ENCODE measurements at regions of chr20 and their contacts with region 1.

Region 1: DNA sequence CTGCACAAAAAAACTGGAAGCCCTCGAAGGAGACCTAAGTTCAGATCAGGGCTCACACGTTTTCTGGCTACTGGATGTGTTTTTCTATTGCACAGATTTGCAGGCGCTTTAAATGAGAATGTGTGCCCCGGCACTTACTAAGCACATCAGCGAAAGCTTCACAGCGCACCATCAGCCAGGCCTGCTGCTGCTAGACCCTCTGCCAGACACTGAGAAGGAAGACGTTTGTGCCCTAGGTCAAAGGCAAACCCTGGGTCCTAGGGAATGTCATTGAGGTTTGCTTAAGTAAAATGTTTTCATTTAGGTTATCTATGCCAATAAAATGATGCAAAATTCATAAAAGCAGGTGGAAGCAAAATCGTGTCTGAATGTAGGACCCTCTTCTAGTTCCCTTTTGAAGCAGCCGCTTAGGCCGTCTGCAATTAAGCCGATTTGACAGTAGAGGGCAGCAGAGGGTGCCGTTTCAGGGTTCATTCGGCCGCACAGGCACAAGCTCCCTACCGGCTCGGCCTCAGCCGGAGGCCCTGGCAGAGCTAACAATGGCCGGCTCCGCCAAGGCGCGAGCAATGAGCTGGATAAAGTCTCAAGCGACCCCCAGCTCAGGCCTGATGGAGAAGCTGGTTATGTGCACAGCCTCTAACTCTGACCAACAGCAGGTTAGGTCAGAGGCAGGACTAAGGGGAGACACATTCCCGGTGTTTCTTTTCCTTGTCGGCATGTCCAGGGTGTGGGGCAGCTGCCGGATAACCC is 107.2 kb upstream of the FOXA2 start:
- DNase-seq: peak; percentile 46 to 70
- H3K4me3 ChIP-seq: no peak overlapping the region
- H3K4me1 ChIP-seq: no peaks in the 10 kb centered on the region
- H3K27me3 ChIP-seq: no peaks in the 10 kb centered on the region

Region 2: GRCh38 chr20:22744341-22745193 is 53.0 kb after region 1 on chr20:
- in situ Hi-C with region 1: no loop called
- DNase-seq: no peak
- H3K4me3 ChIP-seq: no peak overlapping the region
- H3K4me1 ChIP-seq: no peaks in the 10 kb centered on the region
- H3K27me3 ChIP-seq: no peaks in the 10 kb centered on the region

Region 3: GRCh38 chr20:23340524-23340923 is 649.0 kb after region 1 on chr20:
- in situ Hi-C with region 1: loop called (anchors 5 kb)
- DNase-seq: peak; percentile 60 to 74
- H3K4me3 ChIP-seq: no peak overlapping the region
- H3K4me1 ChIP-seq: no peaks in the 10 kb centered on the region
- H3K27me3 ChIP-seq: no peaks in the 10 kb centered on the region

Measured in HAP-1 (cell line).